ENCODE measurements at regions of chr1 and their contacts with region 1.

Region 1: DNA sequence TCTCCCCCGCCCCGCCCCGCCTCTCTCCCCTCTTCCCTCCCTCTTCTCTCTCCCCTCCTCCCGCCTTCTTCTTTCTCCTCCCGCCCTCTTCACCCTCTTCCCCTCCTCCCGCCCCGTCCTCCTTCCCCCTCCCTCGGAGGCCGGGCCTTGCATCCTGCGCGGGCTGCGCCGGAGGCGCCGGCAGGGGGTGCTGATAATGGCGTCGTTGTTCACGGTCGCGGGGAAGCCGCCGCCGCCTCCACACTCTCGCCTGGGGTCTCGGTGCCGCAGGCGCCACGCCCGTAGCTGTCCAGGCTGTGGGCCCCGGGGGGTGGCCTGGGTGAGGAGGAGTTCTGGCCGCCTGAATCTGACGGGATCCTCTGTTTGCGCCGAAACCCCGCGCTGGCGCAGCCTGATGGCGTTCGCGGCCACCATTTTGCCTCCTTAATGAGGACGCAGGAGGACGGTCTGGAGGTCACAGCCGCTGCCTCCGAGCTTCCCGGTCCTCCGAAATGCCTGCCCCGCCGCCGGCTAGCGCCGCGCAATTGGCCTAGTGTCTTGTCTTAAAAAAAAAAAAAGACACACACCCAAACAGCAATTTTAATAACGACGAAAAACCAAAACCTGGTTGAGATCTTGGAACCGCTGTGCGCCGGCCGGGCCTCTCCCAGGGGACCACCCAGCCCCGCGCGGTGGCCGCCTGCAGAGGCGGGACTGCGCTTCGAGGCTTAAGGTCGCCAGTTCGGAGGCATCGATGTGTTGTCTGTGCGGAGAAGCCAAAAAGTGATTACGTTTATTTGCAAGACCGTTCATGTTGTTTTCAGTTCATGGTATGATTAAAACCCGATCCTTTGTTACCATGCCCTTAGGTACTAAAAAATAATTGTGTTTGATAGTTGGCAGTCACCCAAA is 106.6 kb upstream of the HNRNPU start:
- DNase-seq: peak; percentile 93
- H3K4me3 ChIP-seq: peak overlapping the region; percentile 71 to 74
- H3K27ac ChIP-seq: peak overlapping the region; percentile 99 to 100
- H3K4me1 ChIP-seq: peaks cover 6% of the 10 kb centered on the region
- H3K27me3 ChIP-seq: no peaks in the 10 kb centered on the region
- CTCF ChIP-seq: peak; percentile 50 to 81 (median 64)
- POLR2A ChIP-seq: peak; percentile 63

Region 2: GRCh38 chr1:244835276-244836134 is 135.4 kb before region 1 on chr1 and contains the start of gene COX20:
- intact Hi-C with region 1: loop called (anchors 2 kb)
- DNase-seq: peak; percentile 88
- H3K4me3 ChIP-seq: peak within 1 kb of the TSS; percentile 64 to 87
- H3K27ac ChIP-seq: peak within 1 kb of the TSS; percentile 99
- H3K4me1 ChIP-seq: peaks cover 4% of the 10 kb centered on the region
- H3K27me3 ChIP-seq: no peaks in the 10 kb centered on the region
- CTCF ChIP-seq: peak in 2 of 4 experiments; percentile 15 to 36
- POLR2A ChIP-seq: peak; percentile 49
- total RNA-seq, gene COX20: 46.8 to 78.4 TPM

Region 3: DNA sequence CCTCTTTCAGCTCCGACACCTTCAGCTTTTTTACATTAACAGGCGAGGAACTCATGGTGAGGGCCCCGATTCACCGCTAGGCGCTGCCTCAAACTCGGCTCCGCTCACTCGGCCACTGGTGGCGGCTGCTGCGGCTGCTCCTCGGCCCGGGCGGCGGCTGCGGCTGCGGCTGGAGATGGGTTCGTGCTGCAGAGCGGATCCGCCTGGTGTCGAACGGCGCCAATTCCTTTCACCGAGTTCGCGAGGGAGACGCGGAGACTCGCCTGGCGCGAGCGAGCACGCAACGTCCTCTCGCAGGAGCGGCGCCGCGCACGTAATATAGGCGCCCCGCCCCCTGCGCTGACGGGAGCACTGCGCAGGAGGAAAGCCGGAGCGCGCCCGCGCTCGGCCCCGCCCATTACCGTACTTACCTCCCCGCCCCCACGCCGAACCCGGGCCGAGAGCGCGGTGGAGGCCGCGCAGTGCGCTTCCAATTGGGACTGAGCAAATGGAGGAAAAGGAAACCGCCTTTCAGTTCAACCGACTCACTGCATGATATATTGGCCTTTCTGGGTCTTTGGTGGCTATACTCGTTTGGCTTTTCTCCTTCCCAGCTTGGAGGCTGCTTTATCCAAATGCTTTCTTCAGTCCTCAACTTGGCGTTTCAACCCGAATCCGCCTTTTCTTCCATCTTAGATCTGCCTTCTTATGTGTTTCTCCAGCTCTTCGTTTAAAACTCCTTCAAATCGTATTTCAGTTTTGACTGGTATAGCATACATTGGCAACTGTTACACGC is 106.5 kb before region 1 on chr1 and contains the start of gene HNRNPU:
- intact Hi-C with region 1: loop called (anchors 1 kb)
- DNase-seq: peak; percentile 97
- H3K4me3 ChIP-seq: peak within 1 kb of the TSS; percentile 91 to 95
- H3K27ac ChIP-seq: peak within 1 kb of the TSS; percentile 100
- H3K4me1 ChIP-seq: peaks cover 4% of the 10 kb centered on the region
- H3K27me3 ChIP-seq: no peaks in the 10 kb centered on the region
- CTCF ChIP-seq: peak in 2 of 4 experiments; percentile 18 to 62
- POLR2A ChIP-seq: peak; percentile 100
- total RNA-seq, gene HNRNPU: 302 to 350 TPM

Region 4: GRCh38 chr1:245041058-245041698 is 70.3 kb after region 1 on chr1:
- intact Hi-C with region 1: loop called (anchors 5 kb)
- DNase-seq: no peak
- H3K4me3 ChIP-seq: no peak overlapping the region
- H3K27ac ChIP-seq: no peak overlapping the region
- H3K4me1 ChIP-seq: no peaks in the 10 kb centered on the region
- H3K27me3 ChIP-seq: no peaks in the 10 kb centered on the region
- CTCF ChIP-seq: no peak
- POLR2A ChIP-seq: no peak

Region 5: DNA sequence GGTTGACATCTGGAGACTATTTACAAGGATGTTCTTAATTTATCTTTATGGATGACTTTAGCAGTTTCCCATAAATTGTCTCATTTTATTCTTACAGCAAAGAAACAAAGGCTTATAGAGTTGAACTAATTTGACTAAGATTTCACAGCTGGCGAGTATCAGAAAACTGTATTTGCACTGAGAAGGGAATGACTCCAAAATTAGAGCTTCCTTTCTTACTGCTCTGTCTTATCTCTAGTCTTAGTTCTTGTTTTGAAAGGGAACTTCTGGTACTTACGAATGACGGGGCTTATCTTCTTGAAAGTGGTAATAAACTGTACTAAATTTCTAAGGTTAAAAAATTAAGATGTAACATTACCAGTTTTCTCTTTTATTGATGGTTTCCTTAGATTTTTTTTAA is 1608.9 kb after region 1 on chr1:
- intact Hi-C with region 1: loop called (anchors 10 kb)
- DNase-seq: no peak
- H3K4me3 ChIP-seq: no peak overlapping the region
- H3K27ac ChIP-seq: no peak overlapping the region
- H3K4me1 ChIP-seq: peaks cover 3% of the 10 kb centered on the region
- H3K27me3 ChIP-seq: no peaks in the 10 kb centered on the region
- CTCF ChIP-seq: no peak
- POLR2A ChIP-seq: no peak